Panc1 (cell line): ENCODE measurements at regions of chr3 and their contacts with region 1.

Region 1: GRCh38 chr3:54294214-54294613 is 171.9 kb downstream of the CACNA2D3 start:
- DNase-seq: no peak
- ATAC-seq: no peak
- H3K4me3 ChIP-seq: no peak overlapping the region
- H3K27ac ChIP-seq: no peak overlapping the region
- H3K4me1 ChIP-seq: no peaks in the 10 kb centered on the region
- H3K27me3 ChIP-seq: no peaks in the 10 kb centered on the region
- CTCF ChIP-seq: no peak

Region 2: DNA sequence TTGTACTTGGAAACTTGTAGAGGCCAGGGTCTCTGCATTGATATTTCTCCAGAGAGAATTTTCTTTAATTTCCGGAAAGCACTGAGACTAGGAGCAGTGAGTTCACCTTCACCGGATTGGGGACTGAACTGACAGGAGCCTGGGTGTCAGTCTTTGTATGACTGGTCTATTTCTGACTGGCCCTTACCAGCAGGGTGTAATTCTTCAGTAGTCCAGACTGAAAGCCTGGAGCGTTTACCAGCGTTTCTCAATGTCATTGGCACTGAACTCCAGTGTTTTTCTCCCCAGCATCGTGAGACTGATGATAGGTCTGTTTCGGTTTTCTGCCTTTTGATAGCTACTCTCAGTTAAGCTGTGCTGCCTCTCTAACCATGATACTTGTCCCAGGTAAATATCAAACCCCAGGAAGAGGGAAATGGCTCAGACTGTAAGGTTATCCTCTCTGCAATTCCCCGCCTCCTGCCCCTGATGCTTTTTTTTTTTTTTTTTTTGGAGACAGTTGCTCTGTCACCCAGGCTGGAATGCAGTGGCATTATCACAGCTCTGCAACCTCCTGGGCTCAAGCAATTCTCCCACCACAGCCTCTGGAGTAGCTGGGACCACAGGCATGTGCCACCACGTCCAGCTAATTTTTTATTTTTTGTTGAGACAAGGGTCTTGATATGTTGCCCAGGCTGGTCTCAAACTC is 68.2 kb before region 1 on chr3:
- CTCF ChIA-PET with region 1: interaction called, 13 read pairs
- POLR2A ChIA-PET with region 1: no interaction called
- in situ Hi-C with region 1: no loop called
- intact Hi-C with region 1: no loop called
- DNase-seq: no peak
- ATAC-seq: no peak
- H3K4me3 ChIP-seq: no peak overlapping the region
- H3K27ac ChIP-seq: no peak overlapping the region
- H3K4me1 ChIP-seq: no peaks in the 10 kb centered on the region
- H3K27me3 ChIP-seq: no peaks in the 10 kb centered on the region; the same call in 1 of the 2 replicates
- CTCF ChIP-seq: no peak

Region 3: DNA sequence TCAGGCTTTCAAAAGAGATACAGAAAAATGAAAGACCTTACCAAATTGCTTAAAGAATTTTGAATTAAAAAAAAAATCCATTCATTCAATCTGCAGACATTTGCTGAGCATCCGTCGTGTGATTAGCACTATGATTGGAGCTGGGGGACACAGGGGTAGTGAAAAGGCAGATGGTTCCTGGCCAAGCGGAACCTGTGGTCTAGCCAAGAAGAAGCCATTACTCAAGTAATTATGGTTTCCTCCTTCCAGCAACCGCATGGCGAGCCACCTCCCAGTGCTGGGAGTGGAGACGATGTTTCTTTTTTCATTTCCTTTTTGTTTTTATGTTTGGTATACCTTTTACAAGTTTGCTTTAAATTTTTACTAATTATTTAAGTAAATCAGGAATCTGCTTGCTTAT is 31.7 kb before region 1 on chr3:
- CTCF ChIA-PET with region 1: no interaction called
- POLR2A ChIA-PET with region 1: no interaction called
- in situ Hi-C with region 1: no loop called
- intact Hi-C with region 1: no loop called
- DNase-seq: no peak
- ATAC-seq: no peak
- H3K4me3 ChIP-seq: no peak overlapping the region
- H3K27ac ChIP-seq: no peak overlapping the region
- H3K4me1 ChIP-seq: no peaks in the 10 kb centered on the region
- H3K27me3 ChIP-seq: no peaks in the 10 kb centered on the region; the same call in 1 of the 2 replicates
- CTCF ChIP-seq: no peak

Region 4: DNA sequence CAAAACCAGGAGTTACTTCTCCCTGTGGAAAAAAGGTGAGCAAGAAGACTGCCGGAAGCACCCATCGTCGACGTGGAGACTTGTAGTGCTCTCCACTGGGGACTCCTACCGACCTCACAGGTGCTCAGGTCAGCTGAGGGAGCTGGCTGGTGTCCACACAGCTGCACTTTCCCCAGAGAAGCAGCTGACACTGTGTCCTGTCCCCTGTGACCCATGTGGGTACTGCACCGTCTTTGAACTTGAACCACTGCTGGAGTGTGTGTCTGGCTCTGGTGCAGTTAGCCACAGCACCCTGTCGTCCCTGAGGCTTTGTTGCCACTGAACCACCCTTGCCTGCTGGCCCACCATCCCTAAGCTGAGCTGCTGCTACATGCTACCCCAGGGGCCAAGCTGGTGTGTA is 98.9 kb after region 1 on chr3:
- CTCF ChIA-PET with region 1: no interaction called
- POLR2A ChIA-PET with region 1: no interaction called
- in situ Hi-C with region 1: no loop called
- intact Hi-C with region 1: no loop called
- DNase-seq: no peak
- ATAC-seq: no peak; the same call in 1 of the 2 replicates
- H3K4me3 ChIP-seq: no peak overlapping the region
- H3K27ac ChIP-seq: no peak overlapping the region
- H3K4me1 ChIP-seq: no peaks in the 10 kb centered on the region
- H3K27me3 ChIP-seq: no peaks in the 10 kb centered on the region; the same call in 1 of the 2 replicates
- CTCF ChIP-seq: no peak